ENCODE measurements at regions of chr11 and their contacts with region 1.

Region 1: DNA sequence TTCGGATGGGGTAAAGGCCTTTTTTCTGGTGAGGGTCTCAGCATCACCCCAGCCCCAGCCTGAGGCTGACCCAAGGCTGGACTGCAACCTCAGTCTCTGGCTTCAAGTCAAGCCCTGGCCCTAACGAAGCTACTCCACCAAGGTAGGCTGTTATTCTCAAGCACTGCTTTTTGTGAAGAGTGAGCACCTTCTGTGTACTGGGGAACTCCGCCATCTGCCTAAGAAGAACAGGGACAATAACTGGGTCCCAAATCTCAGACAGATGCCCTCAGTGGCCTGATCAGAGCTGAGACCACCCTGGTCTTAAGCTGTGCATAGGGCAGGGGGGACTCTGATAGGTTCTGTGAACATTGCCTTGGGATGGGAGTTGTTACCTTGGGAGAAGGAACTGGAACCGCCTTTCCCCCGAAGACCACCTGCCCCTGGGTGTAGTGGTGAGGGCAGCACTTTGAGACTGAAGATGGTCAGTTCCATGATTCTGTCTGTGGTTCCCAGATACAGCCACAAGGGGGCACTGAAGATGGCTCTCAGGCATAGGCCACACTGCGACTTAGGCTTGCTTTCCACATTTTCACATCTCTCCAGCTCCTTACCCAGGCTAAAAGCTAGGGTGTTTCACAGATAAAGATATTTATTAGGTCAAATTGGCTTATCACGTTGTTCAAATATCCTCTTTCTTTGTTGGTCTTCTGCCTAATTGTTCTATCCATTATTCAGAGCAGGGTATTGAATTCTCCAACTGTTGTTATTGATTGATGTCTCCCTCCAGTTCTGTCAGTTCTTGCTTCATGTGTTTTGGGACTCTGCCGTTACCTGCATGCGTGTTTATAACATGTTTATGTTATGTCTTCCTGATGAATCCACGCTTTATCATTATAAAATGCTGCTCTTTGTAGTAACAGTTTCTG is 11.8 kb upstream of the UVRAG start:
- DNase-seq: peak; percentile 54 to 65
- H3K4me3 ChIP-seq: no peak overlapping the region
- H3K27ac ChIP-seq: no peak overlapping the region
- H3K4me1 ChIP-seq: no peaks in the 10 kb centered on the region
- H3K27me3 ChIP-seq: no peaks in the 10 kb centered on the region
- CTCF ChIP-seq: peak; percentile 97

Region 2: GRCh38 chr11:75388386-75389275 is 414.5 kb before region 1 on chr11:
- CTCF ChIA-PET with region 1: no interaction called
- POLR2A ChIA-PET with region 1: no interaction called
- intact Hi-C with region 1: loop called (anchors 5 kb)
- DNase-seq: peak; percentile 74 to 75
- H3K4me3 ChIP-seq: no peak overlapping the region
- H3K27ac ChIP-seq: no peak overlapping the region
- H3K4me1 ChIP-seq: peaks cover 45% of the 10 kb centered on the region
- H3K27me3 ChIP-seq: no peaks in the 10 kb centered on the region
- CTCF ChIP-seq: peak; percentile 91

Region 3: GRCh38 chr11:75547580-75548058 is 255.5 kb before region 1 on chr11:
- CTCF ChIA-PET with region 1: interaction called, 6 read pairs
- POLR2A ChIA-PET with region 1: interaction called, 3 read pairs
- intact Hi-C with region 1: loop called (anchors 5 kb)
- DNase-seq: peak; percentile 61 to 72
- H3K4me3 ChIP-seq: no peak overlapping the region
- H3K27ac ChIP-seq: no peak overlapping the region
- H3K4me1 ChIP-seq: no peaks in the 10 kb centered on the region
- H3K27me3 ChIP-seq: no peaks in the 10 kb centered on the region
- CTCF ChIP-seq: peak; percentile 98

Region 4: GRCh38 chr11:75706260-75706729 is 96.9 kb before region 1 on chr11:
- CTCF ChIA-PET with region 1: no interaction called
- POLR2A ChIA-PET with region 1: no interaction called
- intact Hi-C with region 1: loop called (anchors 2 kb)
- DNase-seq: peak; percentile 57 to 64
- H3K4me3 ChIP-seq: no peak overlapping the region
- H3K27ac ChIP-seq: no peak overlapping the region
- H3K4me1 ChIP-seq: peaks cover 3% of the 10 kb centered on the region; the same call in 1 of the 2 replicates
- H3K27me3 ChIP-seq: no peaks in the 10 kb centered on the region
- CTCF ChIP-seq: peak; percentile 96

Region 5: DNA sequence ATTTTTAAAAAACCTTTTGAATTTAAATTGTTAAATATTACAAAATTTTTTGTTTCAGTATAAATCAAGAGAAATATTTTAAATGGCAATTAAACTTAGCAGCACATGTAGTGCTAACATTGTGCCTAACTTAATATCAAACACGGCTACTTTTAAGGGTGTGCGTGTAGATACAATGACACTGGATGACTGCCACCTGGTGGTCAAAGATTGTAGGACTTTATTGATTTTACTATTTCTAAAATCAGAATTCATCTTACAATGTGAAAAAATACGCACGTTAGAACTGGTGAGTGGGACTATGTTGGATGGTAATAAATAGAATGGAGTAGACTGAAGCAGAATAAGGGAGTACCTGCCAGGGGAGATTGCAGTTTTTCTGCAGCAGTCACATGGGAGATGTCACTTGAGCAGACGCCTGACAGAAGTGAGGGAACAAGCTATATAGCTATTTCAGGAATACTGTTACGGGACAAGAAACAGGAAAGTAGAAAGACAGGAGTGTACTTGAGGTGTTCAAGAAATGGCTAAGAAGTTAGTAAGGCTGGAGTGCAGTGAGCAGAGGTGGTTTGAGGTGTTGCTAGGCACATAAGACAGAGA is 64.7 kb after region 1 on chr11:
- CTCF ChIA-PET with region 1: interaction called, 7 read pairs
- POLR2A ChIA-PET with region 1: no interaction called
- intact Hi-C with region 1: loop called (anchors 1 kb)
- DNase-seq: peak; percentile 14 to 52
- H3K4me3 ChIP-seq: no peak overlapping the region
- H3K27ac ChIP-seq: no peak overlapping the region
- H3K4me1 ChIP-seq: peaks cover 19% of the 10 kb centered on the region
- H3K27me3 ChIP-seq: no peaks in the 10 kb centered on the region
- CTCF ChIP-seq: peak; percentile 95

Region 6: GRCh38 chr11:76318744-76319384 is 515.7 kb after region 1 on chr11:
- CTCF ChIA-PET with region 1: no interaction called
- POLR2A ChIA-PET with region 1: no interaction called
- intact Hi-C with region 1: loop called (anchors 1 kb)
- DNase-seq: peak; percentile 58 to 82
- H3K4me3 ChIP-seq: no peak overlapping the region
- H3K27ac ChIP-seq: no peak overlapping the region
- H3K4me1 ChIP-seq: 0 out of 2 replicates have a peak, but pooled peaks cover 6% of the 10 kb centered on the region
- H3K27me3 ChIP-seq: no peaks in the 10 kb centered on the region
- CTCF ChIP-seq: peak; percentile 99

Region 7: DNA sequence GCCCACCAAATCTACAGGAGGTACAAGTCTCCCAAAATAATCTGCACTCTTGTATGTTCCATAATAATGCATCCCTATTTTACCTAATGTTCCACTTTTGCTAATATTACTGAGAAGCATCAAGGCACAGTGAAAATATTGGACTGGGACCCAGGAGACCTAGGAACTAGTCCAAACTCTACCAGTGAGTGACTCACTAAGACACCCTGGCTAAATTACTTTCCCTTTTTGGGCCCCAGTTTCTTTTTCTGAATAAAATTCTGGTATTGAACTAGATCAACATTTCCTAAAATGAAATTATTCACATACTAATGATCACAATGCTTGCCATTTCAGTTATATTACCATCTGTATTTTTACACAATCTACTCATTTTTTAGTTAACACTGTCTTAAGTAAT is 558.2 kb after region 1 on chr11:
- CTCF ChIA-PET with region 1: no interaction called
- POLR2A ChIA-PET with region 1: no interaction called
- intact Hi-C with region 1: no loop called
- DNase-seq: no peak
- H3K4me3 ChIP-seq: no peak overlapping the region
- H3K27ac ChIP-seq: no peak overlapping the region
- H3K4me1 ChIP-seq: no peaks in the 10 kb centered on the region
- H3K27me3 ChIP-seq: no peaks in the 10 kb centered on the region
- CTCF ChIP-seq: no peak